Left ventricle myocardium superior (tissue), 1 donor: ENCODE measurements at regions of chr5 and their contacts with region 1.

Region 1: DNA sequence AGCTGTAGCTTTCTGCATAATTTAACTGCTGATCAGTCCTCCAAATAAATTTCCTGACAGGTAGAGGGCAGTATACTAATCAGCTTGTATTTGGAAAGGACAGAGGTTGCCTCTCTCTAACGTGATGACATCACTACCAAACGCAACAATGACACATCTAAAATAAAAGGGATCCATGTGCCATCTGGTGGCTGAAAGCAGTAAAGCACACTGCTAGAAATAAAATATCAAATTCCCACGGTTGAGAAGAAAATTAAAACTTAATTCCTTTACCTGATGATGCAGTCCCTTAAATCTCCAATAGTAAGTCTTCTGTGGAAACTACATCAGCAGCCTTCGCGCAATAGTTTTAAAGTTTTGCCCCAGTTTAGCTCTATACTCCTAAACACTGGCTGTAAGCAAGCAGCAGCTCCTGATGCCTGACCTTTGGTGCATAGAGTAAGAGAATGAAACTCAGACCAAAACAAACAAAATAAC is 54.5 kb downstream of the DIAPH1 start:
- DNase-seq: no peak
- ATAC-seq: peak; percentile 51

Region 2: DNA sequence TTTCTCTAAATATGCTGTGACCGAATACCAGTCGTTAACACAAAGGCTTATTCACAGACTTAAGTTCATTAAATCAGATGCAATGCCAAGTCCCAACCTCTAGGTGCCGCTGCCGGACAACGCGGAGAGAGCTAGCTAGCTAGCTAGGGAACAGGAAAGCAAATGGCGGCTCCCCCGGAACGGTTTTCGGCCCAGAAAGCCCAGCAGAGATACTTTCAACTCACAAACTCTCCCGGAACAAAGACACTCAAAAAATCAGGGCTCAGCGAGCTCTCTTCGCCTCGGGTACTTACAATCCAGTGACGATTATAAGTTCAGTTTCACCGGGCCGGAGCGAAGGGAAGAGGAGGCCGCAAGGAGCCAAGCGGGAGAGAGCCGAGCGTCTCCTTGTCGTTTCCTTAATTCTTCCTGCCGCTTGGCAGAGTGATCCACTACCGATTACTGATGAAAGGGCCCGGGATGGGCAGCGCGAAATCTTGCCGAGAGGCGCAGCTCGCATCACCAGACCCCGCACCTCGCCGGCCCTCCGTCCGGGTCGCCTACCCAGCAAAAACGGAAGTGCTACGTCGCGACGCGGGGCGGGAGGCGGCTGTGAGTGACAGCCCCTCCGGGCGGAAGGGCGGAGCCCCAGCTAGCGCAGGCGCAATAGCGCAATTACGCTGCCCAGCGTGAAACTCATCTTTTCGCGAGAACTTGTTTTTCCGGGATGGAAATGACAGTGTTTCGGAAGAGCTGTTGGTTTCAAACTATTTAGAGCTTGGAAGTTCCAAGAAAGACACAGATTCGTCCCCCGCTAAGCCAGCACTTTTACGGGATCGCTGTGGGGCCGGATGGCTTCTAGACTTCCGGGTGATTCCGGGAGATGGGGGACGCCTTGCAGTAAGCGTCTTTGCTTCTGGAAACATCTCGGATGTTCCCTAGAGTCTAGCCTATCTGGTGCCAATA is 243.8 kb before region 1 on chr5 and contains the start of gene TAF7:
- intact Hi-C with region 1: loop called (anchors 2 kb)
- DNase-seq: peak; percentile 96
- ATAC-seq: peak; percentile 99
- total RNA-seq, gene TAF7: 106 TPM

Region 3: DNA sequence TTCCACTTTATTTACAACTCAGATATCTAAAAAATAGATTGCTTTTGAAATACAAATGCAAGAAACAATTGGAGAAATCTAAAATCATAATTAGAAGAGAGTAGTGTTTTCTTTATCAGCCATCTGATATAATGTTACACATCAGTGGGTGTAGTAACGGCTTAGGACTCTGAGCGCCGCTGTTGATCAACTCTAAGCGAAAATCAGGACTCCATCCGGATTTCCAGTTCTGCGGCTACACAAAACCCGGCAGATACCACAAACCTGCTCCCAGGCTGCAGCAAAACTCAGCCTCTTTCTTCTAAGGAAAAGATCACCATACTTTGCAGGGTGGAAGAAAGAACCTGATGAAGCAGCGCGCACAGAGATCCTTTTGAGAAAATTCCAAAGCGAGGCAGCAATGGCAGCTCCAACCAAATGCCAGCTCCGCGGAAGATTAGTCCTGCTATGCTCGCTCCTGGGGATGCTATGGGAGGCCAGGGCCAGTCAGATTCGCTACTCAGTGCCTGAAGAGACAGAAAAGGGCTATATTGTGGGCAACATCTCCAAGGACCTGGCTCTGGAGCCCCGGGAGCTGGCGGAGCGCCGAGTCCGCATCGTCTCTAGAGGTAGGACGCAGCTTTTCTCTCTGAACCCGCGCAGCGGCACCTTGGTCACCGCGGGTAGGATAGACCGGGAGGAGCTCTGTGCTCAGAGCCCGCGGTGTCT is 161.5 kb before region 1 on chr5 and contains the start of gene PCDHGA9:
- intact Hi-C with region 1: loop called (anchors 10 kb)
- DNase-seq: peak; percentile 35
- ATAC-seq: no peak
- total RNA-seq, gene PCDHGA9: 4.5 TPM